ENCODE measurements at regions of chr5 and their contacts with region 1.

Region 1: DNA sequence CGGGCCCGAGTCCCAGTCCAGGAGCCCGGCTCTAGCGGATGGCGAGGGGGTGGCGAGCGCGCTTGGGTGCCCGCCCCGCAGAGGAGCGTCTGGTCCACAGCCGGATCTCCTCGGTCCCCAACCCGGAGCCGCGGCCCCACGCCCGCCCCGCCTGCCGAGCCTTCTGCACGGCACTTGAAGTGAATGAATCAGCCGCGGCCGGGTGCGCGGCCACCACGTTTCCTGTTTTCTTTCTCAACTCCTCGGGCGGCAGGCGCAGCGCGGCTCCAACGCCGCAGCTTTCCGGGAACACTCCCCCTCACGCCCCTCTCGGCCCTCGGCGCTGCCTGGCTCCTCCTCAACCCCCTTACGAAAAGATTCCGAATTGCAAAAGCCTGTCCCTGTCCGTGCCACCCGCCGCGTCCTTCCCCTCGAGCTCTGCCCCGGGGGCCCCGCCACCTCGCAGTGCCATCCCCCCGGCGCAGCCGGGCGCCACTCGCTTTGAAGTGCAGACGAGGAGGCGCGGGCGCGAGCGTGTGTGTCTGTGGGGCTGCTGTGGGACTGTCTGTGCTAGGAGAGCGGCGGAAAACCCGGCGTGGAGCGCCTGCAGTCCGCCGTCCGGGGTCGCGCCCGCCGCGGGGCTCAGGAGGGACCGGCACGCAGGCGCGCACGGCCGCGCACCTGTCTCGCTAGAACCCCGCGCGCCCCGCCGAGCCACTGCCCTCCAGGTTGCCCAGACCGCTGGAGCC is 456.6 kb downstream of the RAB3C start:
- DNase-seq: peak; percentile 97
- ATAC-seq: peak; percentile 81
- H3K4me3 Mint-ChIP-seq: peak overlapping the region; percentile 89
- H3K27ac Mint-ChIP-seq: peak overlapping the region; percentile 98
- H3K4me1 Mint-ChIP-seq: peaks cover 47% of the 10 kb centered on the region
- H3K27me3 Mint-ChIP-seq: no peaks in the 10 kb centered on the region

Region 2: GRCh38 chr5:58412932-58413331 is 626.5 kb before region 1 on chr5:
- CTCF ChIA-PET with region 1: no interaction called
- DNase-seq: no peak
- ATAC-seq: no peak
- H3K4me3 Mint-ChIP-seq: no peak overlapping the region
- H3K27ac Mint-ChIP-seq: no peak overlapping the region
- H3K4me1 Mint-ChIP-seq: no peaks in the 10 kb centered on the region
- H3K27me3 Mint-ChIP-seq: peaks cover 19% of the 10 kb centered on the region

Region 3: DNA sequence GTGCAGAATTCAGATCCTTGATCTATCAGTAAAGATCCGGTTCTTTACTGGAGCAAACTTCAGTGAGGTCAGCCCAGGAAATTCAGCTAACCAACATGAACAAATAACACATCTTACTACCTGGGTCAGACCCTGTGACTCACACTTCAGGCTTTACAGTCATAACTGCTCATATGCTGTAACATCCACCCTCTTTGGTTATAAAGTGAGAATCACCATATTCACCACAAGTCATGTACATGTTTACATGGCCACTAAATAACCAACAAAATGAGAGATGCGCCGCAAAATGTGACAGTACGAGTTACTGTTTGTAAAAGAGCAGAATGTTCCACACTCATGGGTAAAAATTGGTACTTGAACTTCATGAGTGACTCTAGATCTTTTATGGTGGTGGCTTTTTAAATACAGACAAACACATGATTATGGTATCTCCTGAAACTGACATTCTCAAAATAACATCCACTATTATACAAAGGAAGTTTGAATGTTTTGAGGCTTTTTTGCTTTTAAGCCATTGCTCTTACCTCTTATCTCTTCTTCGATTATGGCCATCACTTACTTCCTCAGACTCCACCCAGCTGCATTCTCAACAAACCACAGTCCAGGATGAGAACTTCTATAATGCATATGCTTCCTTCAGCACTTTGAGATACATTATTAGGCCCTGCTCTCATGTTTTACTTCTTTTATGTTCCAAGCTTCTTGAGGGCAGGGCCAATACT is 60.0 kb after region 1 on chr5:
- CTCF ChIA-PET with region 1: interaction called, 15 read pairs
- DNase-seq: peak; percentile 89
- ATAC-seq: peak; percentile 98
- H3K4me3 Mint-ChIP-seq: peak overlapping the region; percentile 52
- H3K27ac Mint-ChIP-seq: peak overlapping the region; percentile 93
- H3K4me1 Mint-ChIP-seq: peaks cover 61% of the 10 kb centered on the region
- H3K27me3 Mint-ChIP-seq: no peaks in the 10 kb centered on the region

Region 4: DNA sequence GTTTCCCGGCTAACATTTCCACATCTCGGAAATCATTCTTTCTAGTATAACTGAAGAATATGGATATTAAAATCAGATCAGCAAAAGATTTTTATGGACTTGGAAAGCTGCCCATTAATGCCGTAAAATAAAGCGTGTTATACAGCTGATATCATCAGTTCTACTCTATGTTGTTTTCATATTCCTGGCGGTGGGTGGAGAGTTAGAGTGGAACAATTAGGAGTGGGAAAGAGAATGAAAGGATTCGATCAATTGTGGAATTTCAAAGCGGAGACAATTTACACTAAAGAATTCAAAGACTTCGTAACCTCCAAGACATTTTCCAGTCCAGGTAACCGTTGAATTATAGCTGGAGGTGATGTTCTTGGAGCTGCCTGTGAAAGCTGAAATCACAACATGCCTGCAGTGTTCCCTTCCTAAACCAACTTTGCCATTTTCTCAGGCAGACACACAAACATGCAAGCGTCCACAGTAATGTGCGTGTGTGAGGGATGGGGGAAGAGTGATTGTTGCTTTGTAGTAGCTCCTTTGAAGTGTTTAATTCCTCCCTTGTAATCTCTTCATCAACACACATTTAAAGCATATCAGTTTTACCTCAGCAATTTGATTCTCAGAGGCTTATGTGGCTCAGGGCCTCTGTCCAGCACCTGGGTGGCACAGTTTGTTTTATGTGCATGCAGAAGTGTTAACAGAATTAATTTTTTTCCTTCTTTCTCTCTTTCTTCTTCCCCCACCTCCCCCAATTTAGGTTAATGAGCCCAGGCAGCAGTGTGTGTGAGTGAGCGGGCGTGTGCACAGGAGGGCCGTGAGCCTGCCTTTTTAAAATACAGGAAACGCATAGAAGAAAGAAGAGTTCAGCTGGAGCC is 87.5 kb after region 1 on chr5:
- CTCF ChIA-PET with region 1: interaction called, 40 read pairs
- DNase-seq: no peak
- ATAC-seq: peak; percentile 6
- H3K4me3 Mint-ChIP-seq: no peak overlapping the region
- H3K27ac Mint-ChIP-seq: no peak overlapping the region
- H3K4me1 Mint-ChIP-seq: peaks cover 13% of the 10 kb centered on the region
- H3K27me3 Mint-ChIP-seq: no peaks in the 10 kb centered on the region

Region 5: DNA sequence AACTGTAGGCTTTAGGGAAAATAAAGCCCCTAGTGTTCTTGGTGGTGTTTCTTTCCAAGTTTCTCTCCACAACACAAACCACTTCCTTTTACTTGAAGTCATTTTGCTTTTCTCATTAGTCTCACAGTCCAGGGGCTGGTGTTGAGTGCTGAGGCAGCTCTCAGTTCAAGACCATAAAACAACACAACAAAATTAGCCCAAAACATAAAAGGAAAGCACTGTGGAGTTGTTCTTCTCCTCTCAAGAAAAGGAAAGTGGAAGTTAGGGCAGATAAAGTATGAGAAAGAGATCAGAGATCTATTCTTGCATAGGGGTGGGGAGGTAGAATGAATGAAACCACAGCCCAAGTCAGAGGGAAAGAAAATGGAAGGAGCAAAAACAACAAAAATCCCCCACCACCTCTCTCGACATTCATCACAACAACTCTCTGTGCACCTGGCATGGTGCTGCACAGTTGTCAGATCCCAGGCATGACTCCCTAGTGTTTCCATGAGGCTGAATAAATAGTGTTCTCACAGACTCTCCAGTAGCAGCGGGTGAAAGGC is 113.3 kb after region 1 on chr5:
- CTCF ChIA-PET with region 1: interaction called, 15 read pairs
- DNase-seq: peak; percentile 44
- ATAC-seq: peak; percentile 78
- H3K4me3 Mint-ChIP-seq: peak overlapping the region; percentile 52
- H3K27ac Mint-ChIP-seq: peak overlapping the region; percentile 88
- H3K4me1 Mint-ChIP-seq: peaks cover 3% of the 10 kb centered on the region
- H3K27me3 Mint-ChIP-seq: no peaks in the 10 kb centered on the region

Region 6: GRCh38 chr5:59180515-59180914 is 141.1 kb after region 1 on chr5:
- CTCF ChIA-PET with region 1: interaction called, 82 read pairs
- DNase-seq: no peak
- ATAC-seq: no peak
- H3K4me3 Mint-ChIP-seq: no peak overlapping the region
- H3K27ac Mint-ChIP-seq: no peak overlapping the region
- H3K4me1 Mint-ChIP-seq: peaks cover 24% of the 10 kb centered on the region
- H3K27me3 Mint-ChIP-seq: peaks cover 21% of the 10 kb centered on the region

Measured in activated CD8-positive, alpha-beta memory T cell treated with anti-CD3 and anti-CD28 coated beads, Interleukin-2, amount 10 ng/mL, durations not matched to agents 7 days and 5 days (primary cell).